ENCODE measurements at regions of chrX and their contacts with region 1.

Region 1: GRCh38 chrX:154784149-154784995 is 20.9 kb downstream of the MPP1 start:
- DNase-seq: peak in 2 of 4 experiments; percentile 37 to 53
- ATAC-seq: peak; percentile 40
- H3K4me3 ChIP-seq: no peak overlapping the region
- H3K27ac ChIP-seq: peak overlapping the region; percentile 54
- H3K4me1 ChIP-seq: peaks cover 26 to 40% of the 10 kb centered on the region in 2 experiments
- H3K27me3 ChIP-seq: no peaks in the 10 kb centered on the region
- CTCF ChIP-seq: no peak
- EP300 ChIP-seq: peak; percentile 53; the same call in 1 of the 2 replicates
- POLR2A ChIP-seq: peak; percentile 47; the same call in 1 of the 2 replicates
- RAD21 ChIP-seq: no peak

Region 2: DNA sequence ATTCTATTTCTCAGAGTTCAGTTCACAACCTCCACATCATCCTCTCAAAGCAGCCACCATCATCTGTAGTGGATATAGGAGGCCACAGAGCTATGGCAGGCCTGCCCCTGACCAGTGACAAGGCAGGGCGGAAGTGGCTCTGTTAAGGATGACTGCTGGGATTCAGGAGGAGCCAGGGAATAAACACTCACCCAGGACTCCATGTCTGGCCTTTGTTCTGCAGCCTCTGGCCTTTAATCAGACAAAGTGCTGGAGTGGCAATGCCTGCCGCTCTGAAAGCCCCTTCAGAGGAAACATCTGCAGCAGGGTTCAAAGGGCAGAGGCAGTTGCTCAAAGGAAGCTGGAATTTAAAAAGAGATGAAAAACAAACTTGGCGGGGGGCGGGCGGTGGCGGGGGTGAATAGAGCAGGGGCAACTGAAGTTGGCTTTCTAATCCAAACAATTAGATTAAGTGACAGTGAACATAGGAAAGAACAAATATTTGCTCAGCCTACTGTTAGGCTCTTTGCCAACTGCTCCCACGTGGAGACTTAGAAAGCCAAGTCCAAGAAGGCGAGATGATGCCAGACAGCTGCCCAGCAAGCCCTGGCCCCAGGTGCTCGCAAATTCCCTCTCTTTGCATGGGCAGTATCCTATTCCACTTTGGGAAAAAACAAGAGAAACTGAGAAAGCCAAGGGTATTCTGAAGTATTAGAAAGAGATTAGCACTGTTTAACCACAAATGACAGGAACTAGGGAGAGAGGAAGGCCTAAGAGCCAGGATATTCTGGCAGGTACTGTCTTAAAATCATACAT is 15.4 kb after region 1 on chrX:
- CTCF ChIA-PET with region 1: no interaction called
- POLR2A ChIA-PET with region 1: interaction called, 24 read pairs
- in situ Hi-C with region 1: no loop called
- intact Hi-C with region 1: loop called (anchors 2 kb)
- DNase-seq: peak in 1 of 4 experiments; percentile 32
- ATAC-seq: peak; percentile 32; the same call in 1 of the 3 replicates
- H3K4me3 ChIP-seq: peak overlapping the region; percentile 89
- H3K27ac ChIP-seq: peak overlapping the region; percentile 100
- H3K4me1 ChIP-seq: peaks cover 22 to 44% of the 10 kb centered on the region in 2 experiments
- H3K27me3 ChIP-seq: no peaks in the 10 kb centered on the region
- CTCF ChIP-seq: no peak
- EP300 ChIP-seq: no peak
- POLR2A ChIP-seq: peak; percentile 49
- RAD21 ChIP-seq: no peak

Region 3: GRCh38 chrX:154829926-154830442 is 45.6 kb after region 1 on chrX:
- CTCF ChIA-PET with region 1: no interaction called
- POLR2A ChIA-PET with region 1: no interaction called
- in situ Hi-C with region 1: no loop called
- intact Hi-C with region 1: loop called (anchors 5 kb)
- DNase-seq: peak; percentile 20 to 54 (median 35)
- ATAC-seq: peak; percentile 84
- H3K4me3 ChIP-seq: no peak overlapping the region
- H3K27ac ChIP-seq: peak overlapping the region; percentile 56; the same call in 1 of the 3 replicates
- H3K4me1 ChIP-seq: peaks cover 3 to 37% of the 10 kb centered on the region in 2 experiments; a peak in 4 of 5 replicates
- H3K27me3 ChIP-seq: no peaks in the 10 kb centered on the region
- CTCF ChIP-seq: peak; percentile 29 to 52 (median 37); a peak in 2 of 6 replicates
- EP300 ChIP-seq: no peak
- POLR2A ChIP-seq: no peak
- RAD21 ChIP-seq: peak in 1 of 2 experiments; percentile 28; a peak in 1 of 4 replicates

Region 4: DNA sequence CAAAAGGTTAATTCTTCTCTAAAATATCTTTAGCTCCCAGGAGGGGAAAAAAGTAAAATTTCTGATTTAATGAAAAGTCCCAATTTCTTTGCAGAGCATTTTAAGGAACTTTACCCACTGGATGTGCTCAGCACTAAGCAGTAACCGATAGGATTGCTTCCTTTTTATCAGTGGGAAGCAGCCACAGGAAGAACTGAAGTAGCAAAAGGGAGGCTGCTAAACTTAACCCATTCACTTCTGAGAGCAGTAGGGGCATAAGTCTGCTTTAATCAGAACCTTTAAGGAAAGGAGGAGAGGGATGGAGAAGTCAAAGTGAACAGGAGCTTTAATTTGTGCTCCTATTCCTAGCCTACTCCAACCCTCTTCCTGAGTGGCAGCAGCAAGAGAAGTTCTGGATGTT is 238.2 kb after region 1 on chrX and contains the start of gene F8:
- CTCF ChIA-PET with region 1: no interaction called
- POLR2A ChIA-PET with region 1: no interaction called
- in situ Hi-C with region 1: no loop called
- intact Hi-C with region 1: no loop called
- DNase-seq: peak in 2 of 4 experiments; percentile 33 to 60
- ATAC-seq: no peak
- H3K4me3 ChIP-seq: no peak within 1 kb of the TSS; the same call in 1 of the 2 replicates
- H3K27ac ChIP-seq: peak within 1 kb of the TSS; percentile 18; the same call in 1 of the 3 replicates
- H3K4me1 ChIP-seq: peaks cover 14 to 31% of the 10 kb centered on the region in 2 experiments
- H3K27me3 ChIP-seq: no peaks in the 10 kb centered on the region
- CTCF ChIP-seq: no peak
- EP300 ChIP-seq: peak; percentile 73
- POLR2A ChIP-seq: no peak
- RAD21 ChIP-seq: no peak
- polyA plus RNA-seq, gene F8: 0.80 to 0.91 TPM

Region 5: GRCh38 chrX:155242300-155242699 is 457.9 kb after region 1 on chrX:
- CTCF ChIA-PET with region 1: no interaction called
- POLR2A ChIA-PET with region 1: no interaction called
- in situ Hi-C with region 1: no loop called
- intact Hi-C with region 1: no loop called
- DNase-seq: no peak
- ATAC-seq: no peak
- H3K4me3 ChIP-seq: no peak overlapping the region
- H3K27ac ChIP-seq: no peak overlapping the region
- H3K4me1 ChIP-seq: no peaks in the 10 kb centered on the region
- H3K27me3 ChIP-seq: no peaks in the 10 kb centered on the region
- CTCF ChIP-seq: no peak
- EP300 ChIP-seq: no peak
- POLR2A ChIP-seq: no peak
- RAD21 ChIP-seq: no peak

Measured in K562 (cell line).